Heart right ventricle (tissue), 16 donors: ENCODE measurements at regions of chr19 and their contacts with region 1.

Region 1: GRCh38 chr19:48479686-48480085 is 10.5 kb downstream of the CYTH2 start:
- DNase-seq: no peak
- ATAC-seq: peak in 4 of 8 donors; percentile 3 to 35 (median 13)
- H3K4me3 ChIP-seq: peak overlapping the region in 4 of 10 donors; percentile 51 to 81 (median 58)
- H3K27ac ChIP-seq: peak overlapping the region in 9 of 10 donors; percentile 84 to 98 (median 94)
- H3K4me1 ChIP-seq: peaks cover 15 to 27% (median 20%) of the 10 kb centered on the region in 9 donors
- H3K27me3 ChIP-seq: no peaks in the 10 kb centered on the region
- CTCF ChIP-seq: no peak

Region 2: DNA sequence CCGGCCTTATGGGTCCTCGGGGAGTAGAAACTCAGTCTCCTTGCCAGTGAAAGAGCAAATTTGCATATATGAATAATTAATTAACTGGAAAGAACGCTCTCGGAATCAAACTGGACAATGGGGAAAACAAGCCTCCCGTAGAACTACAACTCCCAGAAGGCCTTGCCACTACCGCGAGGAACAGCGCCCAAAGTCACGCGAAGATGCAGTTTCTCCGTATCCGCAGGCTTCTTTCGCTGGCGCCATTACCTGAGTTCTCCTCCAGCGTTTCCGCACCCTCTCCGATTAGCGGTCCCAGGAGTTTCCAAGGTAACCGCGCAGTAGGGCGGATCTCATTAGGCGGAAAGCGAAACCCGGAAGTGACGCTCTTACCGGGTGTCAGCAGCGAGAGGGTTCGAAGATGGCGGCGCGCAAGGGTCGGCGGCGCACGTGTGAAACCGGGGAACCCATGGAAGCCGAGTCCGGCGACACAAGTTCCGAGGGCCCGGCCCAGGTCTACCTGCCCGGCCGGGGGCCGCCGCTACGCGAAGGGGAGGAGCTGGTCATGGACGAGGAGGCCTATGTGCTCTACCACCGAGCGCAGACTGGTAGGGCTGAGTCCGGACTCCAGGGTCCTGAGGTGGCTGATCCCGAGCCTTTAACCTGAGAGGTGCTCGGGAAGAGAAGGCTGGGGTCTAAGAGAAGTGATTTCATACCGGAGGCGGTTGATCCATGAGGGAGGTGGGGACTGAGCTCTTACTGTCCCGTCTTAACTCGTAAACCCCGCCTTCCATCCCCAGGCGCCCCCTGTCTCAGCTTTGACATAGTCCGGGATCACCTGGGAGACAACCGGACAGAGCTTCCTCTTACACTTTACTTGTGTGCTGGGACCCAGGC is 33.8 kb before region 1 on chr19 and contains the start of gene GRWD1:
- intact Hi-C with region 1: no loop called
- DNase-seq: peak; percentile 80 to 92
- ATAC-seq: peak; percentile 90 to 95 (median 94)
- H3K4me3 ChIP-seq: peak within 1 kb of the TSS; percentile 78 to 99 (median 90)
- H3K27ac ChIP-seq: peak within 1 kb of the TSS; percentile 79 to 94 (median 90)
- H3K4me1 ChIP-seq: peaks cover 4 to 32% (median 24%) of the 10 kb centered on the region in 9 donors
- H3K27me3 ChIP-seq: peaks cover 0 to 34% (median 21%) of the 10 kb centered on the region in 7 donors
- CTCF ChIP-seq: peak in 1 of 9 donors; percentile 2
- total RNA-seq, gene GRWD1: 13.2 to 26.2 (median 17.0) TPM

Region 3: DNA sequence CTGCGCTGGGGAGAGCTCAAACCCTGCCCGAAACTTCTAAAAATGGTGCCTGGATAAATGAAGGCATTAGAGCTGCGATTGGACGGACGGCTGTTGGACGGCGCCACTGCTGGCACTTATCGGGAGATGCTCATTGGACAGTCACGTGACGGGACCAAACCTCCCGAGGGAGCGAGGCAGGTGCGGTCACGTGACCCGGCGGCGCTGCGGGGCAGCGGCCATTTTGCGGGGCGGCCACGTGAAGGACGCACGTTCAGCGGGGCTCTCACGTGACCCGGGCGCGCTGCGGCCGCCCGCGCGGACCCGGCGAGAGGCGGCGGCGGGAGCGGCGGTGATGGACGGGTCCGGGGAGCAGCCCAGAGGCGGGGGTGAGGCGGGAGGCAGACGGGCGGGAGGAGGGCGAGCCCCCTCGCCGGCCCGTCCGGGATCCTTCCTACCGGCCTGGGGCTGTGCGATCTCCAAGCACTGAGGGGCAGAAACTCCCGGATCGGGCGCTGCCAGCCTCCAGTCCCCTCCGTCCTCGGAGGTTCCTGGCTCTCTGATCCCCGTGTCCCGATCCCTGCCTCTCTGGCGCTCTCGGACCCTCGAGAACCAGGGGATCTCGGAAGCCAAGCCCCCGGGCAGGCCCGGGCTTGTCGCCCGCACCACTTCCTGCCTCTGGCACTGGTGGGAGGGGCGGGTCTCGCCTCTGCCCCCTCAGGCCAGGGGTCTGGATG is 475.1 kb after region 1 on chr19 and contains the start of gene BAX:
- intact Hi-C with region 1: loop called in 1 of 10 experiments (anchors 10 kb)
- DNase-seq: peak; percentile 96 to 98
- ATAC-seq: peak; percentile 91 to 97 (median 94)
- H3K4me3 ChIP-seq: peak within 1 kb of the TSS; percentile 76 to 98 (median 88)
- H3K27ac ChIP-seq: peak within 1 kb of the TSS; percentile 57 to 96 (median 88)
- H3K4me1 ChIP-seq: peaks cover 5 to 33% (median 19%) of the 10 kb centered on the region in 9 donors
- H3K27me3 ChIP-seq: no peaks in the 10 kb centered on the region
- CTCF ChIP-seq: peak in 1 of 9 donors; percentile 10
- total RNA-seq, gene BAX: 11.5 to 41.5 (median 19.5) TPM